BJ (cell line): ENCODE measurements at regions of chr14 and their contacts with region 1.

Region 1: DNA sequence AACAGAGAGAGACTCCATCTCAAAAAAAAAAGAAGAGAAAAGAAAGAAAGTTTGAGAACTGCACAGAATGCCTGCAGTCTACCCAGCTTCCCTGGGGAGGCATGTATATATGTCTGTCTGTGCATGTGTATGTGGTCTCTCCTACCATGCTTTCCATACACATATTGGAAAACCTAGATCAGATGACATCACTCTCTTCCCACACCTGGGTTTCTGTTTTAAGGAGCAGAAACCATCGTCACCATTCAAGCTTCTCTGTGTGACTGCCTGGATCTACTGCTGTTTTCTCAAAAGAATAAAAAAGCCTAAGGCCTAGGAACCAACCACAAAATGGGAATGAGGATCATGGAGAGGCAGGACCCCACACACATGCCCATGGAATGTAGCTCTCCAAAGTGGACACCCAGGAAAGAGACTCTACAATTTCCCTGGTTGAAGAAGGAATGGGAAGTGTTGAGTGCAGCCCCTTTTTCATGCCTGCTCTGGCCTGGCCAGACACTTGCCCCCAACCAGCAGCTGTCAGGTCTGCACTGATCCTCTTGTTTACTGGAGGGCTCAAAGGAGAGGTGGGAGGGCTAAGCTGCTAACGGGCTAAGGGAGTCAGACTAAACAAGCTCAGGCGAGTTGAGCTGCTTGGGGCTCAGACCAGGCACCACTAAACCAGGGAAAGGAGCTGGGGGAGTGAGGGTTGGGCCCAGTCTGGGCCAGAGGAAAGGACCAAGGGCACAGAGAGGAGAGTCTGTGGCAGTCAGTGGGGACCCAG is 7.7 kb upstream of the PCK2 start:
- DNase-seq: no peak
- H3K4me3 ChIP-seq: no peak overlapping the region
- H3K27me3 ChIP-seq: peaks cover 12% of the 10 kb centered on the region
- CTCF ChIP-seq: no peak

Region 2: DNA sequence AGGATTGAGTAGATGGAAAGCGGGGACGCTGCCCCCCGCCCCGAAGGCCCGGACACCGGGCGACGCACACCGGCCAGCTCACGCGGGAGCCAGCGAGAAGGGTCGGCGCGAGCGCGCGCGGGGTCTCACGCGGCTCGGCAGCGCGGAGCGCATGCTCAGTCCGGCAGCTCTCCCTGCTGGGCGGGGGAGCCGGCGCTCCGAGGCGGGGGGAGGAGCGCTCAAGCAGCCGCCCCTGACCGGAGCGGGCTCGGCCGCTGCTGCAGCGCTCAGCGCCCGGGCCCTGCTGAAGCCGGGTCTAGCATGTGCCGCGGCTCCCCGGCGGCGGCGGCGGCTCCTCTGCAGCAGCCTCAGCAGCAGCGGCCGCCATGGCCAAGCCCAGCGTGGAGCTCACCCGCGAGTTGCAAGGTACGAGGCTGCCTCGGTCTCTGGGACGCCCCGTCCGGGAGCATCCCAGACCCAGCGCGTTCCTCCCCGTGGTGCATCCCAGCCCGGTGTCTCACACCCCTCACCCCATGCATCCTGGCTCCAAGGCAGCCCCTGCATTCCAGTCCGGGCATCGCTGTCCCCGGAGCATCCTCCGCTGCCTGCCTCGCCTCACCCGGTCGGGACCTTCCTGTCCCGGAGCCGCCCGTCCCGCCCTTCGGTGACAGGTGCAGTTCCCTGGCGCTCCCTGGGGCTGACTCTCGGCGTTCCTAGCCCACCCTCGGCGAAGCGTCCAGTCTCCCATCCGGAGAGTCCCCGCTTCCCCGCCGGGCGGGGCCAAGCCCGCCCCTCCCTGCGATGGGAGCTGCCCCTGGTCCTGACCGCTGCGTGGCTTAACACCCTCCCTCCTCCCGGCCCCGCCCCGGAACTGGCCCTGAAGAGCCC is 34.4 kb before region 1 on chr14 and contains the start of gene CARMIL3:
- CTCF ChIA-PET with region 1: interaction called, 200 read pairs
- POLR2A ChIA-PET with region 1: no interaction called
- DNase-seq: no peak
- H3K4me3 ChIP-seq: peak within 1 kb of the TSS; percentile 48
- H3K27me3 ChIP-seq: peaks cover 15% of the 10 kb centered on the region
- CTCF ChIP-seq: no peak
- polyA plus RNA-seq, gene CARMIL3: 0.02 and 0.04 TPM in 2 replicates

Region 3: DNA sequence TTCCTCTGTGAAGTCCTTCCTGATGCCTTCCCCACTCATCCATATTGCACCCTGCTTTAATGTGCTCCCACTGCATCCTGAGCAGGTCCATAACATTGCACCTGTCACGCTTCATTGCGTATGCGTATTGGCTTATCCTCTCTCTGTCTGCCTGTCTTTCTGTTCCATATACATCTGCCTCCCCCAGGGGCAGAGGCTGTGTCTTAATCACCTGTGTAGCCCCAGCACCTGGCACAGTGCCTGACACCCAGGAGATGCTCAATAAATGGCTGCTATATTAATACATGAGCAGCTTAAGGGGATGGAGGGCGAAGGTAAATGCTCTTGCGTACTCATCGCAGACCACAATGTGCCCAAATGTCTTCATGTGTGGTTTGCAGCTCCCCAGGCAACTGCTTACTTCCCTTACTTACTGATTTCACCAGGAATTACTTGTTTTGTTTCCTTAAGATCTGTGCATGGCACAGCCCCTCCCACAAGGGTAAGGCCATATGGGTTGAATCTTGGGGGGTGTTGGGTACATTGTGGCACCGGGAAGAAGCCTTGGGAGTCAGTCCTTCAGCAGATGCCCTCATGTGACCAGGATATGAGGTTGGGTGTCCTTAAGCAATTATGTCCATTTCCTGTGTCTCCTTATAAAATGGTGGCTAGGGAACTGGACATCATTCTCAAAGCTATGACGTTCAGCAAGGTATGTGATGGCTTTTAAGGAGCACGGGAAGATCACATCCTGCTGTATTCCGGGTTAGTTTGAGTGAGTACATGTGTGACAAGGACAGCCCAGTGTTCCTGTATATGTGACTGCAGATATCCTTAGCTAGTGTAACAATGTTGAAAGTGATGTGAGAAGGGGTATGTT is 15.9 kb before region 1 on chr14:
- CTCF ChIA-PET with region 1: interaction called, 12 read pairs
- POLR2A ChIA-PET with region 1: no interaction called
- DNase-seq: no peak
- H3K4me3 ChIP-seq: no peak overlapping the region
- H3K27me3 ChIP-seq: peaks cover 19% of the 10 kb centered on the region
- CTCF ChIP-seq: no peak

Region 4: GRCh38 chr14:24212924-24213865 is 126.8 kb after region 1 on chr14 and contains the start of gene CHMP4A:
- CTCF ChIA-PET with region 1: no interaction called
- POLR2A ChIA-PET with region 1: no interaction called
- DNase-seq: peak; percentile 91
- H3K4me3 ChIP-seq: peak within 1 kb of the TSS; percentile 84
- H3K27me3 ChIP-seq: no peaks in the 10 kb centered on the region
- CTCF ChIP-seq: peak; percentile 46
- polyA plus RNA-seq, gene CHMP4A: 36.3 and 52.1 TPM in 2 replicates

Region 5: GRCh38 chr14:24578558-24578957 is 492.2 kb after region 1 on chr14:
- CTCF ChIA-PET with region 1: no interaction called
- POLR2A ChIA-PET with region 1: no interaction called
- DNase-seq: no peak
- H3K4me3 ChIP-seq: no peak overlapping the region
- H3K27me3 ChIP-seq: no peaks in the 10 kb centered on the region
- CTCF ChIP-seq: no peak